ENCODE measurements at regions of chr18 and their contacts with region 1.

Region 1: DNA sequence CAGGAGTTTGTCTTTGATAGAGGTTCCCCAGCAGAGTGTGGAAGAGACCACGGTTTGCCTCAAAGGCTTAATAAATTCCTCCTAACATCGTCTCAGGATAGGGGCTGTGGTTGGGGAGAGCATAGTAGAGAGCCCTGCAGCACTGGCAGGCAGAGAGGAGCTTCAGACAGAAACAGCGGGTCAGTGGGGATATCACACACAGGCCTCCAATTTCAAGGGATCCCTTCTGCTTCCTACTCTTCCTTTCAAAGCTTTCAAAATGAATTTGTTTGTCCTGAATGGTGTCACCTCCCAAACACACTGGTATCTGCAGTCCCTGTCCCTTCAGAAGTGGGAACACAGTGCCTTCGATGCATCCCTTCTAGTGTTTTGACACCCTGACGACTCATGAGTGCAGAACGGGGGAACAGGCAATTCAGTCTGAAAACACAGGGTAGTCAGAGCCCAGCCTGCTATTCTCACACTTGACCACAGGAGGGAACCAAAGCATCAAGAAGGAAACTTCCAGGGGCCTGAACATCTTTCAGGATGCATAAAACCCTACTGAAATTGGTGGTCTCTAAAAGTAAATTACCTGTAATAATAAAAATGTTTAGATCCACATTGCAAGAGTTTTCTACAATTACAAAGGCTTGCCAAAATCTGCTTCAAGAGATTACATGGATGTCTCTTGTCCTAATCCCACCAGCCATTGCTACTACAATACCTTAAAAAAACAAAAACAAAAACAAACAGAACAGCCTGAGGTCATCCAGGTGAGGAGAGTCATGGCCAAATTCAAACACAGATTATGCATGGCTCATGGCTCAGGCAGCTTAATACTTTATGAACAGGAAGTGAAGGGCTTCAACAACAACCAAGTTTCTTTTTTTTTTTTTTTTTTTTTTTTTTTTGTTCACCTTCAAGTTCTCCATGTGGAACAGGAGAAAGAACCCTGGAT is 49.8 kb downstream of the SLC14A2 start:
- DNase-seq: peak; percentile 54
- H3K4me3 Mint-ChIP-seq: no peak overlapping the region
- H3K27ac Mint-ChIP-seq: peak overlapping the region; percentile 48
- H3K4me1 Mint-ChIP-seq: peaks cover 50% of the 10 kb centered on the region
- H3K27me3 Mint-ChIP-seq: peaks cover 14% of the 10 kb centered on the region

Region 2: DNA sequence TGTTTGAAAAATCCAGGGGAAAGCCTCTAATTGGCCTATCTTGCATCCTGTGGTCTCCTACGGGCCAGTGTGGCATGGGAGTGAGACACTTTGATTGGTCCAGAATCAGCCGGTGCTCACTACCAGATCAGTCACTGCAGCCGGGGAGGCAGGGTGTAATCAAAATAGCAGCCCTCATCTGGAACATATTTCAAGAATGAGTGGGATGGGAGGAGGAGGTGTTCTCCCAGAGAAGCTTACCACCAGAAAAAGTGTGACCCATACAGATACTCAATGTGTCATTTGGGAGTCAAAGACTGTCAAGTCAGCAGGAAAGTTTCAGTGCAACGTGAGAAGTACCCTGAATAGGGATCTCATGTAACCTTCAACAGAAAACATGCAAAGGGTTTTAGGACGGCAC is 443.7 kb before region 1 on chr18:
- intact Hi-C with region 1: no loop called
- DNase-seq: no peak
- H3K4me3 Mint-ChIP-seq: no peak overlapping the region
- H3K27ac Mint-ChIP-seq: no peak overlapping the region
- H3K4me1 Mint-ChIP-seq: no peaks in the 10 kb centered on the region
- H3K27me3 Mint-ChIP-seq: peaks cover 3% of the 10 kb centered on the region

Region 3: DNA sequence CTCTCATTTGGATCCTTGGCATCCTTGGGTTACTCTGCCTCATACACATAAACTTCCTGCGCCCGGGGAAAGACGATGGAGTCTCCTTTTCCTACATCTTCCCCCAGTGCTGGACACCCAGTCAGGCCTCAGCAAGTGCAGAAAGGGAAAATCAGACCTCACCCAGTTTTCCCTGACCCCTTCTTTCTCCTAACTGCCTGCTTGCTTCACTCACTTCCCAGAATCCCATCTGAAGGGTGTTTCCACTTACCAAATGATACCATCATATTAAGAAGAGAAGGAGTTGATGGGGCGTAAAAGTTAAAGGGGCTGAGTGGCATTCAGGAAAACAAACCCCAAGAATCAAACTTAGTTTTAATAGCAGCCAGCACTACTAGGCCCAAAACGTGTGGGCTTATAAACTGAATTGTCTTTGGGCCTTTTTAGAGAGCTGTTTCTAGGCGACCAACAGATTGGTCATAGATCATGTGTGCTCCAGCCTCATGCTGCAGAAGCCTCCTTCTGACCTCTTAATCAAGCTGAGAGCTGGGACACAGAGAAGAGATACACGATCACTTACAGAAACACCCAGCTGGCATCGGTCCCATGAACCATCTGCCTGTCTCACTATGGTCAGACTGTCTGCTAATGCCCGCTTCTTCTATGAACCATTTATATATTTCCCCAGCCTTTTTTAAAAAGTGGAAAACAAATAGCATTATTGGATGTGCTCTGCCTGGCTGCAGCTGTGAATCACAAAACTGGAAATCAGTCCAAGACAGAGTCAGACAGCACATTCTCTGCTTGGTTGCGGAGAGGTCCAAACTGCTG is 215.5 kb before region 1 on chr18:
- intact Hi-C with region 1: no loop called
- DNase-seq: no peak
- H3K4me3 Mint-ChIP-seq: no peak overlapping the region
- H3K27ac Mint-ChIP-seq: no peak overlapping the region
- H3K4me1 Mint-ChIP-seq: no peaks in the 10 kb centered on the region
- H3K27me3 Mint-ChIP-seq: no peaks in the 10 kb centered on the region

Region 4: DNA sequence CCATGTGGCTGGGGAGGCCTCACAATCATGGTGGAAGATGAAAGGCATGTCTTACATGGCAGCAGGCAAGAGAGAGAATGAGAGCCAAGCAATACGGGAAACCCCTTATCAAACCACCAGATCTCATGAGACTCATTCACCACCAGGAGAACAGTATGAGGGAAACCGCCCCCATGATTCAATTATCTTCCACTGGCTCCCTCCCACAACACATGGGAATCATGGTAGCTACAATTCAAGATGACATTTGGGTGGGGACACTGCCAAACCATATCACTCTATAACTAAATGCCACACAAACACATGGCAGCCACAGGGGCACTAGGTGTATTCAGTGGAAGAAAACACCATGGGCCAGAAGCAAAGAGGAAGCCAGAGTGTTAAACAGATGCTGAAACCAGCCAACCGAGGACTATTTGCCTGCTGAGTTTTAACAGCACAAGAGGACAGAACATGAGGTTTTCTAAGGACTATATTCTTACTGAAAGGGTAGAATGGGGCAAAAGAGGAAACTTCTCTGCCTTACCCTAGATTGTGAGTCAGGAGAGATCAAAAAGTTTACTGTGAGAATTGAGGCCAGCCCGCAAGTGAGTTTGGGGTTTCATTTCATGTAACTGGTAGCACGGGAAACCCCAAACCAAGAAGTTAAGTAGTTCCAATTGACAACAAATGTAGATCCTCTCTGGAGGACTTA is 209.5 kb after region 1 on chr18:
- intact Hi-C with region 1: loop called (anchors 1 kb)
- DNase-seq: peak; percentile 38
- H3K4me3 Mint-ChIP-seq: peak overlapping the region; percentile 6
- H3K27ac Mint-ChIP-seq: peak overlapping the region; percentile 89
- H3K4me1 Mint-ChIP-seq: peaks cover 24% of the 10 kb centered on the region
- H3K27me3 Mint-ChIP-seq: no peaks in the 10 kb centered on the region

Region 5: GRCh38 chr18:45910405-45911023 is 245.4 kb after region 1 on chr18:
- intact Hi-C with region 1: loop called (anchors 1 kb)
- DNase-seq: peak; percentile 27
- H3K4me3 Mint-ChIP-seq: no peak overlapping the region
- H3K27ac Mint-ChIP-seq: no peak overlapping the region
- H3K4me1 Mint-ChIP-seq: no peaks in the 10 kb centered on the region
- H3K27me3 Mint-ChIP-seq: no peaks in the 10 kb centered on the region

Region 6: GRCh38 chr18:46013484-46014189 is 348.5 kb after region 1 on chr18:
- intact Hi-C with region 1: loop called (anchors 5 kb)
- DNase-seq: no peak
- H3K4me3 Mint-ChIP-seq: no peak overlapping the region
- H3K27ac Mint-ChIP-seq: peak overlapping the region; percentile 53
- H3K4me1 Mint-ChIP-seq: peaks cover 18% of the 10 kb centered on the region
- H3K27me3 Mint-ChIP-seq: no peaks in the 10 kb centered on the region

Measured in activated T-helper 2 cell treated with anti-CD3 and anti-CD28 coated beads, Interferon-gamma antibody, Interleukin-2, Interleukin-4, amounts not matched to agents 10 μg/mL and 5 μg/mL and 100 μg/mL, durations not matched to agents 14 hours and 24 hours and 36 hours (primary cell).